ENCODE measurements at regions of chr1 and their contacts with region 1.

Region 1: GRCh38 chr1:155172732-155173477 is at the start of gene KRTCAP2:
- DNase-seq: peak; percentile 97
- ATAC-seq: peak; percentile 84
- H3K4me3 Mint-ChIP-seq: peak within 1 kb of the TSS; percentile 96
- H3K27ac Mint-ChIP-seq: peak within 1 kb of the TSS; percentile 98
- H3K4me1 Mint-ChIP-seq: peaks cover 52% of the 10 kb centered on the region
- H3K27me3 Mint-ChIP-seq: no peaks in the 10 kb centered on the region
- total RNA-seq, gene KRTCAP2: 170 to 190 TPM

Region 2: DNA sequence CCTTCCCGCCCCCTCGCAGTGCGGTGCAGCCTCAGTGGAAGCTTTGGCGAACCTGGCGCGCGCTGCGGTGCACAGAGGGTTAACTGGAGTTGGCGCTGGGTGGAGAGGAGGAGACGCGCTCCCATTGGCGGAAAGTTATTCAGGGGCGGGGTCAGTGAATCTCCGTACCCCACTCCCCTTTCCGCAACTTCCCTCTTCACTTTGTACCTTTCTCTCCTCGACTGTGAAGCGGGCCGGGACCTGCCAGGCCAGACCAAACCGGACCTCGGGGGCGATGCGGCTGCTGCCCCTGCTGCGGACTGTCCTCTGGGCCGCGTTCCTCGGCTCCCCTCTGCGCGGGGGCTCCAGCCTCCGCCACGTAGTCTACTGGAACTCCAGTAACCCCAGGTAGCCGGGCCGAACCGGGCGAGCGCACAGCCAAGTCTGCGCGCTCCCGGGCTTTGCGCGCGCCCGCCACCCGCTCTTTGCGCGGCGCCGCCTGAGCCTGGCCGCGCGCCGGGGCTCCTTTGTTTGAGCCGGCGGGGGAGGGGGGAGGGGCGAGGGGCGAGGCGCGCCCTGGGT is 109.3 kb before region 1 on chr1 and contains the start of gene EFNA4:
- CTCF ChIA-PET with region 1: interaction called, 14 read pairs
- POLR2A ChIA-PET with region 1: no interaction called
- DNase-seq: peak; percentile 90
- ATAC-seq: peak; percentile 85
- H3K4me3 Mint-ChIP-seq: peak within 1 kb of the TSS; percentile 89
- H3K27ac Mint-ChIP-seq: peak within 1 kb of the TSS; percentile 51
- H3K4me1 Mint-ChIP-seq: peaks cover 41% of the 10 kb centered on the region
- H3K27me3 Mint-ChIP-seq: no peaks in the 10 kb centered on the region
- total RNA-seq, gene EFNA4: 7.8 to 9.7 TPM

Region 3: DNA sequence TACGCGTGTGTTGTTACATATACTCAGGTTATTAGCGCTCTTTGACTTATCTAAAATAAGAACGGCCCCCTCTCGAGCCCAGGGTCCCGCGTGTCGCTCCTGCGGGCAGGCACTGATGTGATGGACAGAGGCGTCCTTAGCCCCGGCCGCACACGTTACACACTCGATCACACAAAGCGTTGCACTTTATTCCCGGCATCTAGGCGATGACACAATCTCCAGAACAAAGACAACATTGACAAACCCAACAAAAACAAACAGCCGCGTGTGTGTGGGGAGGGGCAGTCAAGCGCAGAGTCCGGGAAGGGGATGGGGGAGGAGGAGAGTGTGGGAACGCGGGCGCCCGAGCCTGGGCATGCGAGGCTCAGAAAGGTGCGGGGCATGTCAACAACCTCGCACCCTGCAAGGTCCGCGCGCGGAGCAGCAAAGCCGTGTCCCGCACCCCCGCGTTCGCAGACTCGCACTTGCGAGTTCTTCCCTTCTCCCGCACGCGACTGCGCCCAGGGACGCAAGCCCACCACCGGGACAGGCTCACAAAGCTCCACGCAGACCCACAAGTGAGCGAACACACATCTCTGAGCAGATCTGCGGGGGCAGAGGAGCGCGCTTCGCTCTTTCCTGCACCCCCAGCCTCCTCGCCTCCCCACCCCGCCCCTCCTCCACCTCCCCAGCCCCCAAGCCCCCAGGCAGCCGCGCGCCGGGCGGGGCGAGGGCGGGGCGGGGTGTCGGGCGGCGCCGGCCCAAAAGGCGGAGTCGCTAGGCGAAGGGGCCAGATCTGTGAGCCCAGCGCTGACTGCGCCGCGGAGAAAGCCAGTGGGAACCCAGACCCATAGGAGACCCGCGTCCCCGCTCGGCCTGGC is 45.6 kb before region 1 on chr1 and contains the start of gene EFNA1:
- CTCF ChIA-PET with region 1: interaction called, 13 read pairs
- POLR2A ChIA-PET with region 1: interaction called, 4 read pairs
- DNase-seq: peak; percentile 39
- ATAC-seq: peak; percentile 85
- H3K4me3 Mint-ChIP-seq: peak within 1 kb of the TSS; percentile 68
- H3K27ac Mint-ChIP-seq: no peak within 1 kb of the TSS
- H3K4me1 Mint-ChIP-seq: peaks cover 30% of the 10 kb centered on the region
- H3K27me3 Mint-ChIP-seq: peaks cover 50% of the 10 kb centered on the region
- total RNA-seq, gene EFNA1: not detected

Region 4: GRCh38 chr1:155145491-155145890 is 27.4 kb before region 1 on chr1:
- CTCF ChIA-PET with region 1: interaction called, 18 read pairs
- POLR2A ChIA-PET with region 1: interaction called, 3 read pairs
- DNase-seq: no peak
- ATAC-seq: no peak
- H3K4me3 Mint-ChIP-seq: no peak overlapping the region
- H3K27ac Mint-ChIP-seq: no peak overlapping the region
- H3K4me1 Mint-ChIP-seq: peaks cover 2% of the 10 kb centered on the region
- H3K27me3 Mint-ChIP-seq: peaks cover 23% of the 10 kb centered on the region

Region 5: GRCh38 chr1:155193275-155193990 is 20.5 kb after region 1 on chr1:
- CTCF ChIA-PET with region 1: interaction called, 161 read pairs
- POLR2A ChIA-PET with region 1: interaction called, 68 read pairs
- DNase-seq: peak; percentile 82
- ATAC-seq: peak; percentile 49
- H3K4me3 Mint-ChIP-seq: peak overlapping the region; percentile 84
- H3K27ac Mint-ChIP-seq: peak overlapping the region; percentile 98
- H3K4me1 Mint-ChIP-seq: peaks cover 40% of the 10 kb centered on the region
- H3K27me3 Mint-ChIP-seq: no peaks in the 10 kb centered on the region

Region 6: DNA sequence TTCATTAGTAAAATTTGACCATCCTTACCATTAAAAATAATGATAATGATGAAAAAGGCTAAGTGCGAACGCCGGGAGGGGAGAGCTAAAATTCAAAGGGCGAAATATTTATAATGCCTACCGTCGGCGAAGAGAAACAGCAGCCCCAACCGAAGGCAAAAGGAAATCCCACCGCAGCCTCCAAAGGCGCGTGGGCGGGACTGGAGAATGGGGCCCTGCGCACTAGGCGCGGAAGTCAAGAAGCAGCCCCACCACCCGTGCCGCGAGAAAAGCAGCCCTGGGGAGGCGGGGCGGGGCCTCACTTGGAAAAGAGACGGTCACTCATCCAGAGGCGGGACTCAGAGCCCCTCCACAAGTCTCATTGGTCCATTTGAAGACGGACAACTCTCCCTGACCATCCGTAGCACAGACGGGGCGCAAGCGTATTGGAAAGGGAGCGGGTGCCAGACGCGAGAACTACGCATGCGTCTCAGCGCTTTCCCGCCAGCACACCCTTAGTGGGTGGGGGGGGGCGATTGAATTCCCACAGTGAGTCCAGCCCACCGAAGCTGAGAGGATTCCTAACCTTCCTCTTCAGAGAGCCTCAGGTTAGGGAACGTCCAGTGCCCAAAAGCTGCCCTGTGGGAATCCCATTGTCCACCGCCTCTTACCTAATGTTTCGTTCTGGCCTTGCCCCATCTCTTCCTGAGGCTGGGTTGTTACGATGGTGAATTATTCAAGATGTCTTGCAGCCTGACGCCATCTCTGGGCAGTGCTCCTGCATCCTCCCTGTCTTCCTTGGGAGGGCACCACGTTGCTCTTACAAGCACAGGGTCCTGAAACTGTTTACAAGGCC is 54.6 kb after region 1 on chr1:
- CTCF ChIA-PET with region 1: interaction called, 23 read pairs
- POLR2A ChIA-PET with region 1: interaction called, 6 read pairs
- DNase-seq: peak; percentile 99
- ATAC-seq: peak; percentile 96
- H3K4me3 Mint-ChIP-seq: peak overlapping the region; percentile 91
- H3K27ac Mint-ChIP-seq: peak overlapping the region; percentile 94
- H3K4me1 Mint-ChIP-seq: peaks cover 33% of the 10 kb centered on the region
- H3K27me3 Mint-ChIP-seq: no peaks in the 10 kb centered on the region

Region 7: GRCh38 chr1:155360051-155360450 is 187.1 kb after region 1 on chr1:
- CTCF ChIA-PET with region 1: no interaction called
- POLR2A ChIA-PET with region 1: no interaction called
- DNase-seq: no peak
- ATAC-seq: no peak
- H3K4me3 Mint-ChIP-seq: no peak overlapping the region
- H3K27ac Mint-ChIP-seq: no peak overlapping the region
- H3K4me1 Mint-ChIP-seq: no peaks in the 10 kb centered on the region
- H3K27me3 Mint-ChIP-seq: no peaks in the 10 kb centered on the region